PC-9 (cell line): ENCODE measurements at regions of chr22 and their contacts with region 1.

Region 1: GRCh38 chr22:42425337-42425988 is 6.7 kb downstream of the NFAM1 start:
- DNase-seq: no peak
- H3K4me3 ChIP-seq: no peak overlapping the region
- H3K27ac ChIP-seq: no peak overlapping the region
- H3K4me1 ChIP-seq: no peaks in the 10 kb centered on the region
- H3K27me3 ChIP-seq: peaks cover 37% of the 10 kb centered on the region
- CTCF ChIP-seq: no peak

Region 2: DNA sequence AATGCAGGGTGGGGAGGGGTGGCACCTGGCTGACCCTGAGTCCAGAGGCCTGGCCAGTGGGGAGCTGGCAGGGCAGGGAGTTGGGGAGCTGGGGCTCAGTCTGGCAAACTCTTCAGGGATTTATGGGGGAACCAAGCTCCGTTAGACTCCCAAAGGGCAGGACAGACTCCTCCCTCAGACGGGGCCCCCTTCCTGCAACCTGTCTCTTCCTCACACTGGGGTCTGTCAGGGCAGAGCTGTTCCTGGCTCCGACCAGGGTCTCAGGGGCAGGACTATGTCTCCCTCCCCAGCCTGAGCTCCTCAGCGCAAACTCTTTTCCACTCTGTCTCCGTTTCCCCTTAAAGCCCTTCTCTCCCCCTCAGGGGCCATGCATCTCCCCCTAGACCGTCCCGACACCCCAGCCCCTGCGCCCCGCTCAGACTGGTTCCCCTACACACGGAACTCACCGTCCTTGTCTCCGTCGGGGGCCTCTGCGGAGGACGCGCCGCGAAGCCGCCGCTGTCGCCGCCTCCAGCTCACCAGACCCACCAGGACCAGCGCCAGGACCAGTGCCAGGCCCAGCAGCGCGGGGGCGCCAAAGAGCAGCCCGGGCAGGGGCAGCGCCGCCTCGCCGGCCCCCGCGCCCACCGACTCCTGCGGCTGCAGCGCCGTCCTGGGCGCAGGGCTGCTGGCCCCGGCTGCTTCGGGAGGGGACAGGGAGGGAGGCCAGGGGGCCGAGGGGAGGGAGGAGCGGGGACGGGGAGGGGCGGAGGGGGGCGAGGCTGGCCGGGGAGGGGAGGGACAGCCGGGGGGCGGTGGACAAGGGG is 499.6 kb before region 1 on chr22:
- CTCF ChIA-PET with region 1: no interaction called
- POLR2A ChIA-PET with region 1: interaction called, 11 read pairs
- intact Hi-C with region 1: no loop called
- DNase-seq: peak in 1 of 2 experiments; percentile 78
- H3K4me3 ChIP-seq: peak overlapping the region; percentile 24; the same call in 1 of the 2 replicates
- H3K27ac ChIP-seq: no peak overlapping the region
- H3K4me1 ChIP-seq: no peaks in the 10 kb centered on the region
- H3K27me3 ChIP-seq: peaks cover 6% of the 10 kb centered on the region; the same call in 1 of the 2 replicates
- CTCF ChIP-seq: peak; percentile 80

Region 3: GRCh38 chr22:42444077-42444904 is 18.8 kb after region 1 on chr22:
- CTCF ChIA-PET with region 1: interaction called, 18 read pairs
- POLR2A ChIA-PET with region 1: no interaction called
- intact Hi-C with region 1: no loop called
- DNase-seq: peak; percentile 72 to 83
- H3K4me3 ChIP-seq: peak overlapping the region; percentile 30; the same call in 1 of the 2 replicates
- H3K27ac ChIP-seq: no peak overlapping the region
- H3K4me1 ChIP-seq: peaks cover 21% of the 10 kb centered on the region; the same call in 1 of the 2 replicates
- H3K27me3 ChIP-seq: 0 out of 2 replicates have a peak, but pooled peaks cover 7% of the 10 kb centered on the region
- CTCF ChIP-seq: peak; percentile 83